MCF 10A (cell line): ENCODE measurements at regions of chr18 and their contacts with region 1.

Region 1: GRCh38 chr18:74299746-74300145 is 8.0 kb upstream of the CYB5A start:
- DNase-seq: no peak
- H3K4me3 Mint-ChIP-seq: no peak overlapping the region
- H3K27ac Mint-ChIP-seq: no peak overlapping the region
- H3K4me1 Mint-ChIP-seq: no peaks in the 10 kb centered on the region
- H3K27me3 Mint-ChIP-seq: no peaks in the 10 kb centered on the region
- CTCF ChIP-seq: no peak

Region 2: GRCh38 chr18:74310411-74310810 is 10.7 kb after region 1 on chr18:
- CTCF ChIA-PET with region 1: interaction called, 12 read pairs
- POLR2A ChIA-PET with region 1: no interaction called
- intact Hi-C with region 1: no loop called
- DNase-seq: peak; percentile 76
- H3K4me3 Mint-ChIP-seq: no peak overlapping the region
- H3K27ac Mint-ChIP-seq: peak overlapping the region; percentile 4
- H3K4me1 Mint-ChIP-seq: peaks cover 6% of the 10 kb centered on the region
- H3K27me3 Mint-ChIP-seq: no peaks in the 10 kb centered on the region
- CTCF ChIP-seq: peak; percentile 35